ENCODE measurements at regions of chr3 and their contacts with region 1.

Region 1: DNA sequence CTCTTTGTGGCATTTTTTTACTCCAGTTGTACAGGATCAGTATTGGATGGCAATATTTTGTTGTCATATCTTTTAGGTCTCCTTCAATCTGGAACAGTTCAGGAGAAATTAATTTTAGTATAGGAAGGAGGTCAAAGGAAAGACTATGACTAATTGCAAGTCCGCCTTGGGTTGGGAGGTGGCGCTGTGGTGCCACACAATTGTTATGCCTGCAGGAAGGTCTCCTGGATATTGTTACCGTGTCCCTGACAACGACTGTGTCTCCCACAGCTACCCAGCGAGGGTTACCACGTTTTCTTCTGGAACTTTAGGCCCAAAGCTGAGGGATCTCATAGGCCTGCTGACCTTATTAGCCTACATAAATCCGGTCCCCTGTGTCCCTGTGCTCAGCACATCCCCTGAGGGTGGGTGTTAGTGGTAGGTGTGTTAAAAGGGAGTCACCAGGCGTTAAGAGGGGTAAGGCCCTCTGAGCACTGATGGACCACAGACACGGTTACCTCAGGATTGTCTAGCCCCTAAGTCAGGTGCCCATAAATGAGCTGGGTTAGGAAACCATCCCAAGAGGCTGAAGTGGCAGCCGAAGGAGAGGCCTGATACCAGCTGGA is 31.5 kb downstream of the KCNAB1 start:
- DNase-seq: peak; percentile 56 to 83 (median 75)
- H3K4me3 ChIP-seq: no peak overlapping the region
- H3K27ac ChIP-seq: peak overlapping the region in 3 of 59 donors; percentile 17 to 82 (median 37)
- H3K27me3 ChIP-seq: no peaks in the 10 kb centered on the region
- CTCF ChIP-seq: peak; percentile 38 to 87 (median 74)

Region 2: DNA sequence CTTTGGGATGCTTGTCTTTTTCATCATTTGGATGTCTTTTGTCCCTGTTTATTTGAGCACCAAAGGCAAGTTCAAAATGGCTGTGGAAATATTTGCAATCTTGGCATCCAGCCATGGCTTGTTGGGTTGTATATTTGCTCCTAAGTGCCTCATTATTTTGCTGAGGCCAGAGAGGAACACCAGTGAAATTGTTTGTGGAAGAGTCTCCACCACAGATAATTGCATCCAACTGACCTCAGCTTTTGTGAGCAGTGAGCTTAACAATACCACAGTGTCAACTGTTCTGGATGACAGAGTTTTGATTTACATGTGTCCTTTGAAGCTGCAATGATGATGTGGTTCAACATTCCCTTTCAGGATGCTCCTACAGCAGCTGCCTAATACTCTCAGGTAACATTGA is 114.6 kb before region 1 on chr3:
- intact Hi-C with region 1: loop called in 1 of 2 experiments (anchors 5 kb)
- DNase-seq: peak in 2 of 10 donors; percentile 60 to 63
- H3K4me3 ChIP-seq: peak overlapping the region in 3 of 59 donors; percentile 9 to 24 (median 13)
- H3K27ac ChIP-seq: peak overlapping the region; percentile 3 to 98 (median 81)
- H3K27me3 ChIP-seq: no peaks in the 10 kb centered on the region
- CTCF ChIP-seq: peak in 3 of 56 donors; percentile 9 to 15 (median 12)

Region 3: GRCh38 chr3:156233876-156234275 is 82.0 kb after region 1 on chr3:
- intact Hi-C with region 1: no loop called
- DNase-seq: no peak
- H3K4me3 ChIP-seq: no peak overlapping the region
- H3K27ac ChIP-seq: no peak overlapping the region
- H3K27me3 ChIP-seq: no peaks in the 10 kb centered on the region
- CTCF ChIP-seq: no peak

Region 4: GRCh38 chr3:156460206-156460611 is 308.3 kb after region 1 on chr3:
- intact Hi-C with region 1: no loop called
- DNase-seq: no peak
- H3K4me3 ChIP-seq: no peak overlapping the region
- H3K27ac ChIP-seq: peak overlapping the region in 13 of 59 donors; percentile 5 to 69 (median 24)
- H3K27me3 ChIP-seq: no peaks in the 10 kb centered on the region
- CTCF ChIP-seq: no peak

Region 5: DNA sequence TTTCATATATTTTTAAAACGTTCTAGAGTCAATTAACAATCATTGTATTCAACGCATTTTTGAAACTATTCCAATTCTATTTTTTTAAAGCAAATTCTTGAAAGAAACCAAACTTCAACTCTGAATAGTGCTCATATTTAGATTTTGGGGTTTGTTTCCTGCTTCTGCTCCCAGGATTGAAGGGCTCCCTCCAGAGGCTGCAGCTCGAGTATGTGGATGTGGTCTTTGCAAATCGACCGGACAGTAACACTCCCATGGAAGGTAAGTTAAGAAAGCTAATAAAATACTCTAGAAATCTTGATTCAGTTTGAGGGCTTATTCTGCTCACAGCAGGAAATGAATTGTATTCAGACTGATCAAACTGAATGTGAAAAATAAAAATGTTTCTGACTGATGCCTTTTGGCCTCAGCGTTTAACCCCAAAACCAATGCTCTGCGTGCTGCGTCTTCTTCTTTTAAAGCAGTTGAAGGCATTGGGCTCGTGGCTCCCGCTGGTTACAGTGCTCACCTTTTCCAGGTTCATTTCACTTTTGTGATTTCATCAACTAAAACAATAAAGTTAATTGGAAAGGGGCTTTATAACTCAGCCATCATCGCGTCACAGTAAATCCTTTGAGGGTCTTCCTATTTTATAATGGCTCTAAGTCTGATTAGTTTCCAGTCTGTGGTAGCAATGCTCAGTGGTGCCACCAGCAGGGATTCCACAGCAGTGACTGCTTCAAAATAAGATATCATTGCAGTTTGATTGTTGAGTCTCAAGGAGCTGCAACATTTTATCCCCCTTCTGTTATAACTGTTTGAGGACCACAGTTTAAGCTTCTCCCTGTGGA is 322.8 kb after region 1 on chr3:
- intact Hi-C with region 1: loop called in 1 of 2 experiments (anchors 10 kb)
- DNase-seq: peak in 1 of 10 donors; percentile 23
- H3K4me3 ChIP-seq: peak overlapping the region in 5 of 59 donors; percentile 1 to 40 (median 9)
- H3K27ac ChIP-seq: no peak overlapping the region
- H3K27me3 ChIP-seq: no peaks in the 10 kb centered on the region
- CTCF ChIP-seq: peak in 47 of 56 donors; percentile 6 to 57 (median 38)

Region 6: DNA sequence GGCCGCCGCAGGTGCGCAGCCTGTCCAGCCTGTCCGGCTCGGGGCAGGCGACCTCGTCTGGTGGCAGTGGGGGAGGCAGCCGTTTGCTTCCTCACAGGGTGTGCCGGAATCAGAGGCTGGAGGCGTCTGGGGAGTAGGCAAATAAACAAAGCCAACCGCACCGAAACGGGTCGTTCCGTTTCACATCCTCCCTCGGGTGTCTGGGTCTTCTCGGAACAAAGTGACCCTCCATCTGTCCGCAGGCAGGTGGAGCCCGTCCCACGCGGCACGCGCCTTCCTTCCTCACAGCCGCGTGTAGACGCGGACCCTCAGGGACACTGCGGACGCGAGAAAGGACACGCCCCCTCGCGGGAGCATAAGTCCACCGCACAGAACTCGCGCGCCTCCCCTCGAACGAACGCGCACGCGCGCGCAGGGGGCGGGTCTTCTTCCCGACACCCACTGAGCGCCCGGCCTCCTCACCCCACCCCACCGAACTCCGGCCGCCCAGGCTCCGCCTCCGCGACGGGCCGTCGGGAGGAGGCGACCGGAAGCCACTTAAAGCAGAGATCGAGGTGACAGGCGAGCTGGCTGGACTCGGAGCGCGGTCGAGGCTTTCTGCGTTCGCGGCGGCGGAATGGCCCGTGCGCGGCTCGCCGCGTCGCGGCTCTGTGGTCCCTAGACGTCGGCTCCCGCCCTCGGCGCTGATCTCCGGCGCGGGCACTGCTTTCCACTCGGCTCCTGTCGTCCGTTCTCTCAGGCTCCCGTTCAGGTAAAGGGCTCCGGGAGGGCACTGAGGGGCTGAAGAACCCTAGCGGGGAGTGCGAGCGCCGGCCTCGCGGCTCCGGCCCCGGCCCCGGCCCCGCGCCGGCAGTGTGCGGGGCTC is 522.4 kb after region 1 on chr3 and contains the start of gene TIPARP:
- intact Hi-C with region 1: loop called in 1 of 2 experiments (anchors 10 kb)
- DNase-seq: peak; percentile 96 to 99 (median 98)
- H3K4me3 ChIP-seq: peak within 1 kb of the TSS; percentile 66 to 98 (median 89)
- H3K27ac ChIP-seq: peak within 1 kb of the TSS; percentile 65 to 97 (median 93)
- H3K27me3 ChIP-seq: no peaks in the 10 kb centered on the region
- CTCF ChIP-seq: peak; percentile 44 to 98 (median 83)
- total RNA-seq, gene TIPARP: 13.7 to 81.5 (median 24.6) TPM

Region 7: DNA sequence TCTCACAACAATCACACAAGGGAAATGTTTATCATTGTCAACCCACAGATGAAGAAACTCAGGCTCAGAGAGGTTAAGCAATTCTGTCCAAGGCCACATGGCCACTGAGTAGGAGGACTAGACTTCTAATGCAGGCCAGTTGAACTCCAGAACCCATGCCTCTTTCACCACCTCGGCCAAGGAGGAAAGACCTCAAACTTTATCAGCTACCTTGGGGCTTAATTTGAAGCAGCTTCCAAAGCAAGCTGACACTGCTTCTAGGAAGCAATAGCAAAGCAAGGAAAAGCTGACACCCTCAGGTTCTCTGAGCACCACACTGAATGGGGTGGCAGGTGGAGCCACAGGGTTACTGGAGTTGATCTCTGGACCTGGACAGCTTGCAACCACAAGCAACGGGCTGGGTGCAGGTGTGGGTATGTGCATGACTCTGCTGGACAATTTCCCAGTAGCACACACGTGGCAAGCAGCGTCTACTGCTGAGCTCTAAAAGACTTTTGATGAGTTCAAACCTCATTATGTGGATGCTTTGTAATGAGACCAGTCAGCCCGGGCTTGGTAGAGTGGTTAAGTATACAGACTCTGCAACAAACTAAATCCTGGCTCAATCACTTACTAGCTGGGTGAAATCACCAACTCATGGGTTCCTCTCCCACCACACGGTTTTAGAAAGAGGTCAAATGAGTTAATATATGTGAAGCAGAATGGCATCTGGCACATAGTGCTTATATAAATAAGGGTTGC is 984.9 kb after region 1 on chr3:
- intact Hi-C with region 1: loop called (anchors 2 to 5 kb)
- DNase-seq: no peak
- H3K4me3 ChIP-seq: peak overlapping the region in 17 of 59 donors; percentile 17 to 63 (median 49)
- H3K27ac ChIP-seq: peak overlapping the region; percentile 60 to 100 (median 96)
- H3K27me3 ChIP-seq: no peaks in the 10 kb centered on the region
- CTCF ChIP-seq: no peak

Measured in dorsolateral prefrontal cortex (tissue), 120 donors.